ENCODE measurements at regions of chr15 and their contacts with region 1.

Region 1: GRCh38 chr15:79049416-79049815 is 41.2 kb downstream of the RASGRF1 start:
- DNase-seq: no peak
- ATAC-seq: no peak
- H3K4me3 ChIP-seq: no peak overlapping the region
- H3K27ac ChIP-seq: no peak overlapping the region
- H3K4me1 ChIP-seq: no peaks in the 10 kb centered on the region
- CTCF ChIP-seq: no peak
- EP300 ChIP-seq: no peak
- POLR2A ChIP-seq: no peak
- RAD21 ChIP-seq: no peak

Region 2: GRCh38 chr15:79035111-79035601 is 14.3 kb before region 1 on chr15:
- CTCF ChIA-PET with region 1: interaction called, 11 read pairs
- POLR2A ChIA-PET with region 1: no interaction called
- DNase-seq: no peak
- ATAC-seq: peak; percentile 58 to 74; a peak in 5 of 6 replicates
- H3K4me3 ChIP-seq: no peak overlapping the region
- H3K27ac ChIP-seq: no peak overlapping the region
- H3K4me1 ChIP-seq: no peaks in the 10 kb centered on the region
- CTCF ChIP-seq: no peak
- EP300 ChIP-seq: no peak
- POLR2A ChIP-seq: no peak
- RAD21 ChIP-seq: no peak

Region 3: GRCh38 chr15:79257454-79257853 is 208.0 kb after region 1 on chr15:
- CTCF ChIA-PET with region 1: no interaction called
- POLR2A ChIA-PET with region 1: no interaction called
- DNase-seq: peak in 1 of 2 experiments; percentile 7
- ATAC-seq: no peak
- H3K4me3 ChIP-seq: no peak overlapping the region
- H3K27ac ChIP-seq: no peak overlapping the region
- H3K4me1 ChIP-seq: no peaks in the 10 kb centered on the region
- CTCF ChIP-seq: no peak
- EP300 ChIP-seq: no peak
- POLR2A ChIP-seq: no peak
- RAD21 ChIP-seq: no peak